BJ (cell line): ENCODE measurements at regions of chr9 and their contacts with region 1.

Region 1: GRCh38 chr9:127140842-127141675 is 18.6 kb upstream of the ANGPTL2 start:
- DNase-seq: no peak
- H3K4me3 ChIP-seq: no peak overlapping the region
- H3K27me3 ChIP-seq: no peaks in the 10 kb centered on the region; the same call in 1 of the 2 replicates
- CTCF ChIP-seq: no peak

Region 2: GRCh38 chr9:126956917-126957686 is 184.0 kb before region 1 on chr9:
- CTCF ChIA-PET with region 1: no interaction called
- POLR2A ChIA-PET with region 1: no interaction called
- DNase-seq: peak; percentile 22
- H3K4me3 ChIP-seq: no peak overlapping the region
- H3K27me3 ChIP-seq: no peaks in the 10 kb centered on the region; the same call in 1 of the 2 replicates
- CTCF ChIP-seq: no peak

Region 3: DNA sequence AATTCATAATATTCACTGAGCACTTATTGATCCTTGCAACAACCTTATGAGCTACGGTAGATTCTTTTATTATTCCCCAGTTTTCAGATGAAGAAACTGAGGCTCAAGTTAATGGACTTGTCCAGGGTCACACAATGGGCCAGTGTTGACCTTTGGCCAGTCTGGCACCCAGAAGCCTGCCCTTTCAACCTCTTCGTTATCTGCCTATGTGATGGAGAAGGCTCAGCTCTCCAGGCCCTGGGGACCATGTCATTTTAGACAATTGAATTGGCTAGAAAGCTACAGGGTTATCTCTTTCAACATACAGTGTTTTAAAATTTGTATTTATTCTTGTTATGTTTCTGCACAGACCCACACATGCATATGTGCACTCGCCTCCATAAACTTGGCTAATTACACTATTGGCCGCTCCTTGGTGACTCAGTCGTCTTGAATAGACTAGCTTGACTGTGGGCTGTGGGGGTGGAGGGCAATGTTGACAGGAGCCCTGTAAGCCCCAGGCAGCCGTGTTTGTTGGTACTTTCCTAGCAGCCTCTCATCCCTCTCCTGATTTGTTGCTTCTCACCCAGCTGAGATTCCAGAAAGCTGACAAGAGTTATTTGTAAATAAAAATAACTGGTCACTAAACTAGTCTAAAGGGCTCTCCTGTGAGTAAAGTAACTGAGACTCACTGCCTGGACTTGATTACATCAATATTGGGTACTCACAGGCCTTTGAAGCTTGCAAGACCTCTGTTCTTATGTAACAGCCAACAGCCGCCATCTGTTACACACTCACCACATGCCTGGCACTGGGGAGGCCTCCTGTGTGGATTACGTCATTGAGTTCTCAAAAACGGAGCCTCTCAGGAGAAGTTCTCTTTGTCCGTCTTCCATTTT is 10.2 kb before region 1 on chr9:
- CTCF ChIA-PET with region 1: interaction called, 3 read pairs
- POLR2A ChIA-PET with region 1: interaction called, 34 read pairs
- DNase-seq: peak; percentile 84
- H3K4me3 ChIP-seq: no peak overlapping the region
- H3K27me3 ChIP-seq: no peaks in the 10 kb centered on the region
- CTCF ChIP-seq: no peak